Ovary (tissue), 10 donors: ENCODE measurements at regions of chr1 and their contacts with region 1.

Region 1: DNA sequence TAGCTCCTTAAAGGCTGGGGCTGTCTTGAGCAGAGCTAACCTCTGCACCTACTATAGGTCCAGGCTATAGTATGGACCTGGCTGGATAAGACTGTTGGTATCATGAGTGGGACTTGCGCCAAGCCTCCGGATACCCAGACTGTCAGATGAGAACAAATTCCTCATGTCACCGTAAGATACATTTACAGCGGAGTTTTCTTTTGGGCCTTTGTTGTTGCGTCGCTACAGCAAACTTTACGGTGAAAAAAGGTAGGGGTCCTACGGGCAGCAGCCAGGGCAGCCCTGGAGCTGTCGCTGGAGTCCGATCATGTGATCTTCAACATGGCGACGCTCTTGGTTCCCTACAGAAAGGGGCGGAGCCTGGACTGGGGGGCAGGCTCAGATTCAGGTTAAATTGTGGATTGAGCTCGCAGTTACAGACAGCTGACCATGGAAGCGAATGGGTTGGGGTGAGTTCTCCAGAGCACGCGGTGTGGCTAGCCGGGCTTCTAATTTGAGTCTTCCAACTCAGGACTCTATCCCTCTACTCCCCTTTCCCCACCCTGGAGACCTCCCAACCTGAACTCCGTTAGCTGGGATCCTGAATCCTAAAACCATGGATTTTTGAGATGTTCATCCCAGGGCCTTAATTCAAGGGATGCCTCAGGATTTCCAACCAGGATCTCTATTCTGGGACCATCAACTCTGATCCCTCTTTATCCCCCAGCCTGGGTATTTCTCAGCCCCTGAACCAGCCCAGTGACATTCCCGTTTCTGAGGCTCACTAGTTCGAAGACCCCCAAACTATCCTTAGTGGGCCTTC is at the start of gene UROD:
- DNase-seq: peak; percentile 89 to 93 (median 90)
- H3K4me3 ChIP-seq: peak within 1 kb of the TSS; percentile 82
- H3K27ac ChIP-seq: peak within 1 kb of the TSS; percentile 48 to 71
- H3K4me1 ChIP-seq: peaks cover 14% of the 10 kb centered on the region
- H3K27me3 ChIP-seq: no peaks in the 10 kb centered on the region
- CTCF ChIP-seq: no peak
- EP300 ChIP-seq: no peak
- POLR2A ChIP-seq: peak; percentile 25
- total RNA-seq, gene UROD: 69.2 to 92.3 (median 74.7) TPM

Region 2: GRCh38 chr1:44830900-44831304 is 181.1 kb before region 1 on chr1:
- intact Hi-C with region 1: loop called in 3 of 4 experiments (anchors 5 kb)
- DNase-seq: peak in 1 of 5 donors; percentile 14
- H3K4me3 ChIP-seq: no peak overlapping the region
- H3K27ac ChIP-seq: no peak overlapping the region
- H3K4me1 ChIP-seq: no peaks in the 10 kb centered on the region
- H3K27me3 ChIP-seq: no peaks in the 10 kb centered on the region
- CTCF ChIP-seq: no peak
- EP300 ChIP-seq: no peak
- POLR2A ChIP-seq: no peak

Region 3: GRCh38 chr1:44842862-44843655 is 169.0 kb before region 1 on chr1 and contains the start of gene PTCH2:
- intact Hi-C with region 1: loop called in 3 of 4 experiments (anchors 5 to 10 kb)
- DNase-seq: peak; percentile 89 to 94 (median 91)
- H3K4me3 ChIP-seq: peak within 1 kb of the TSS; percentile 55
- H3K27ac ChIP-seq: peak within 1 kb of the TSS; percentile 32 to 33
- H3K4me1 ChIP-seq: peaks cover 14% of the 10 kb centered on the region
- H3K27me3 ChIP-seq: no peaks in the 10 kb centered on the region
- CTCF ChIP-seq: no peak
- EP300 ChIP-seq: no peak
- POLR2A ChIP-seq: peak; percentile 67
- total RNA-seq, gene PTCH2: 1.8 to 21.2 (median 10.7) TPM

Region 4: DNA sequence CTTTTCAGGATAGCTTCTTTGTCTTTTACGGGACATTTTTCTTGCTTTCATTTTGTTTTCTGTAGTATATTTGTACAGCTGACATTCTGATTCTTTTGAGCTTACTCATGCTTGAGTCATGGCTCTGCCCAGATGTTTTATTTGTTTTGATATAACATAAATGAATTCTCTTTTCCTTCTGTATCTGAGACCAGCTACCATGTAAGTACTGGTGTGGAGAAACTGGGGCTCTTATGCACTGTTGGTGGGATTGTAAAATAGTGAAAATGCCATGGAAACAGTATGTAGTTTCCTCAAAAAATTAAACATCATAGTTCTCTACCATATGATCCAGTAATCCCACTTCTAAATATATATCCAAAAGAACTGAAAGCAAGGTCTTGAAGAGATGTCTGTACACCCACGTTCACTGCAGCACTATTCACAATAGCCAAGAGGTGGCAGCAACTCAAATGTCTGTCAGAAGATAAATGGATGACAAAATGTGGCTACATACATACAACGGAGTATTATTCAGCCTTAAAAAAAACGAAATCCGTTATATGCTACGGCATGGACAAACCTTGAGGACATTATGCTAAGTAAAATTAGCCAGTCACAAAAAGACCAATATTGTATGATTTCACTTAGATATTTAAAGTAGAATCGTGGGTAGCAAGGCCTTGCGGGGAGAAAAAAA is 87.1 kb before region 1 on chr1:
- intact Hi-C with region 1: no loop called
- DNase-seq: no peak
- H3K4me3 ChIP-seq: no peak overlapping the region
- H3K27ac ChIP-seq: no peak overlapping the region
- H3K4me1 ChIP-seq: no peaks in the 10 kb centered on the region
- H3K27me3 ChIP-seq: no peaks in the 10 kb centered on the region
- CTCF ChIP-seq: no peak
- EP300 ChIP-seq: no peak
- POLR2A ChIP-seq: no peak

Region 5: DNA sequence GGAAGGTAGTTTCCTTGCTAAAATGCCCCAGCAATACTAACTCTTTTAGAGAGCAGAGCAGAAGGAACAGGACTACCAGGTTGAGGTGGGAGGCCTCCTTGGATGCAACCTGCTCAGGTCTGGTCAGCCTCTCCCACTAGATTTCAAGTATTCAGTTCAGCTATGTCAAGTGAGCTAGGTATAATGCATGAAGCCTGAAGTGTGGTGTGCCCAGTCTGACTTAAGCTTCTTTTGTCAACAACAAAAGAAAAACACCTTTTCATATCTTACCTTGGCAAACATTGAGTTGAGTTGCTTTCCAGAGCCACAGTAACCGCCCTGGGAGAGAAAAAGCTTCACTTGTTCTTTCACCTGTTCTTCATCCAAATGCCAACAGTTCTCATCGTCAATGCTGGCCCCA is 47.8 kb after region 1 on chr1:
- intact Hi-C with region 1: no loop called
- DNase-seq: no peak
- H3K4me3 ChIP-seq: no peak overlapping the region
- H3K27ac ChIP-seq: no peak overlapping the region
- H3K4me1 ChIP-seq: no peaks in the 10 kb centered on the region
- H3K27me3 ChIP-seq: no peaks in the 10 kb centered on the region
- CTCF ChIP-seq: no peak
- EP300 ChIP-seq: no peak
- POLR2A ChIP-seq: no peak

Region 6: GRCh38 chr1:45490626-45491486 is 478.8 kb after region 1 on chr1 and contains the start of gene TESK2:
- intact Hi-C with region 1: loop called in 3 of 4 experiments (anchors 5 to 10 kb)
- DNase-seq: peak; percentile 95 to 98 (median 98)
- H3K4me3 ChIP-seq: peak within 1 kb of the TSS; percentile 97
- H3K27ac ChIP-seq: peak within 1 kb of the TSS; percentile 34 to 88
- H3K4me1 ChIP-seq: no peaks in the 10 kb centered on the region
- H3K27me3 ChIP-seq: no peaks in the 10 kb centered on the region
- CTCF ChIP-seq: peak in 2 of 3 donors; percentile 32 to 58
- EP300 ChIP-seq: no peak
- POLR2A ChIP-seq: peak; percentile 76
- total RNA-seq, gene TESK2: 6.7 to 12.5 (median 9.7) TPM

Region 7: GRCh38 chr1:45583264-45583665 is 571.2 kb after region 1 on chr1:
- intact Hi-C with region 1: loop called in 1 of 4 experiments (anchors 10 kb)
- DNase-seq: peak; percentile 93 to 96 (median 94)
- H3K4me3 ChIP-seq: peak overlapping the region; percentile 71
- H3K27ac ChIP-seq: peak overlapping the region; percentile 18 to 82
- H3K4me1 ChIP-seq: peaks cover 9% of the 10 kb centered on the region
- H3K27me3 ChIP-seq: no peaks in the 10 kb centered on the region
- CTCF ChIP-seq: no peak
- EP300 ChIP-seq: no peak
- POLR2A ChIP-seq: no peak